CD8-positive, alpha-beta memory T cell (primary cell): ENCODE measurements at regions of chr14 and their contacts with region 1.

Region 1: GRCh38 chr14:67571272-67571850 is 28.7 kb downstream of the PIGH start:
- DNase-seq: peak; percentile 51 to 79 (median 59)
- H3K4me3 ChIP-seq: no peak overlapping the region
- H3K4me3 Mint-ChIP-seq: no peak overlapping the region
- H3K27ac ChIP-seq: no peak overlapping the region
- H3K27ac Mint-ChIP-seq: no peak overlapping the region
- H3K4me1 ChIP-seq: no peaks in the 10 kb centered on the region
- H3K4me1 Mint-ChIP-seq: no peaks in the 10 kb centered on the region
- H3K27me3 ChIP-seq: no peaks in the 10 kb centered on the region
- H3K27me3 Mint-ChIP-seq: peaks cover 5% of the 10 kb centered on the region in 2 donors

Region 2: DNA sequence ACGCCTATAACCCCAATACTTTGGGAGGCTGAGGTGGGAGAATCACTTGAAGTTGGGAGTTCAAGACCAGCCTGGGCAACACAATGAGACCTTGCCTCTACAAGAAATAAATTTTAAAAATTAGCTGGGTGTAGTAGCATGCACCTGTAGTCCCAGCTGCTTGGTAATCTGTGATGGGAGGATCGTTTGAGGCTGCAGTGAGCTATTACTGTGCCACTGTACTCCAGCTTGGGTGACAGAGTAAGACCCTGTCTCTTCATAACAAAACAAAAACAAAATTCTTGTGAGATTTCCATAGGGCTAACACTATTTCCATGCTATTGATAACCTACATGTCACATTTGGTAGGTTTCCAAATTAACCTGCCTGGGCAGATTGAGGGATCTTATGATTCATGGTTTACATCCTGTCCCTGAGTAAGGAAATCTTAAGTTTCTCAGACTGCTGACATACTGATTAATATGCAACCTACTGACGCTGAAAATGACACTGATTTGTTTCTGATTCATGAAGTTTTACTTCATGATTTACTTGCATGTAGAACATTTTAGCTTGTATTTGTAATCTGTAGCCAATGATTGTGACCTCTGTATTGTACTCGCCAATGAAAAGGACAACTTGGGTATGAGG is 227.6 kb before region 1 on chr14:
- CTCF ChIA-PET with region 1: no interaction called
- POLR2A ChIA-PET with region 1: no interaction called
- DNase-seq: no peak
- H3K4me3 ChIP-seq: no peak overlapping the region
- H3K4me3 Mint-ChIP-seq: no peak overlapping the region
- H3K27ac ChIP-seq: no peak overlapping the region
- H3K27ac Mint-ChIP-seq: peak overlapping the region in 2 of 8 donors; percentile 17 to 47
- H3K4me1 ChIP-seq: no peaks in the 10 kb centered on the region
- H3K4me1 Mint-ChIP-seq: no peaks in the 10 kb centered on the region
- H3K27me3 ChIP-seq: no peaks in the 10 kb centered on the region
- H3K27me3 Mint-ChIP-seq: no peaks in the 10 kb centered on the region

Region 3: DNA sequence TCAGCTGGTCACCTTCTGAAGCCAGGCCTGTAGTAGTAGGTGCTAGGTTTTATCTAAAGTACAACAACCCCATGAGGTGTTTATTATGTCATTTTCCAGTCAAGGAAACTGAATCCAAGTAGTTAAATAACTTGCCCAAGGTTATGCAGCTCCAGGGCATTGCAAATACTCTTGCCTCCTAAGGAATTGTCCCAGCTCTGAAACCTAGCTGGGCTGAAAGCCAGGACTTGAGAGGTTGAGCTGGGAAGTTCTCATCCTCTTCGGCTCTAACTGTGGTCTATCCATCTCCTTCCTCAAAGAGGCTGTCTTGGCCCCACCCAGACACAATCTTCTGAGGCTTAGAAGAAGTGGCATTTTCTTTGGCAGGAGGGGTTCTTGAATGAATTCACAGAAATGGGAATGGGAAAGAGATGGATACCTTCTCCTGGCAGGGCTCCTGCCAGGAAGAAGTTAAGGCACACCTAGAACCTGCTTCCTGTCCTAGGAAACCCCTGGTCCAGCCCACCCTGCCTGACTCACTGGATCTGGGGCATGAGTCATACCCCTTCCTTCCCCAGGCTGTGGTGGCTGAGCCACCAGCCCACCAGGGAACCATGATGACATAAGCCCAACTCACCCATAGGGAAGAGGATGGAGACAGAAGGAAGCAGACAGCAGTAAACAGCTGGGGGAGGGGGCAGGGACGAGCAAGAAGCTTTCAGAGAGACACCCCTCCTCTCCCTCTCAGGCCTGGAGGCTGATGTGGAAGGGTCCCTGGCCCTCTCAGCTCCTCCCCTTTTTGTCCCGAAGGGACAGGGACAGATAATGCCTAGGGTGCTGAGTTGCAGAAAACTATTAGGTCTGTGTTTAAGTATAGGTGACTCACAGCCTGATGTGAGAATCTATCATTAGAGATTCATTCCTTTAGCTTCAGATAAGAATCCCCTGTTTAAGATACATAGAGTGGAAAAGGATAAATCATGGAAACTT is 157.3 kb before region 1 on chr14:
- CTCF ChIA-PET with region 1: interaction called, 13 read pairs
- POLR2A ChIA-PET with region 1: no interaction called
- DNase-seq: no peak
- H3K4me3 ChIP-seq: no peak overlapping the region
- H3K4me3 Mint-ChIP-seq: no peak overlapping the region
- H3K27ac ChIP-seq: no peak overlapping the region
- H3K27ac Mint-ChIP-seq: no peak overlapping the region
- H3K4me1 ChIP-seq: peaks cover 6% of the 10 kb centered on the region
- H3K4me1 Mint-ChIP-seq: peaks cover 0 to 9% (median 2%) of the 10 kb centered on the region in 3 donors
- H3K27me3 ChIP-seq: no peaks in the 10 kb centered on the region
- H3K27me3 Mint-ChIP-seq: peaks cover 4 to 9% of the 10 kb centered on the region in 2 donors

Region 4: DNA sequence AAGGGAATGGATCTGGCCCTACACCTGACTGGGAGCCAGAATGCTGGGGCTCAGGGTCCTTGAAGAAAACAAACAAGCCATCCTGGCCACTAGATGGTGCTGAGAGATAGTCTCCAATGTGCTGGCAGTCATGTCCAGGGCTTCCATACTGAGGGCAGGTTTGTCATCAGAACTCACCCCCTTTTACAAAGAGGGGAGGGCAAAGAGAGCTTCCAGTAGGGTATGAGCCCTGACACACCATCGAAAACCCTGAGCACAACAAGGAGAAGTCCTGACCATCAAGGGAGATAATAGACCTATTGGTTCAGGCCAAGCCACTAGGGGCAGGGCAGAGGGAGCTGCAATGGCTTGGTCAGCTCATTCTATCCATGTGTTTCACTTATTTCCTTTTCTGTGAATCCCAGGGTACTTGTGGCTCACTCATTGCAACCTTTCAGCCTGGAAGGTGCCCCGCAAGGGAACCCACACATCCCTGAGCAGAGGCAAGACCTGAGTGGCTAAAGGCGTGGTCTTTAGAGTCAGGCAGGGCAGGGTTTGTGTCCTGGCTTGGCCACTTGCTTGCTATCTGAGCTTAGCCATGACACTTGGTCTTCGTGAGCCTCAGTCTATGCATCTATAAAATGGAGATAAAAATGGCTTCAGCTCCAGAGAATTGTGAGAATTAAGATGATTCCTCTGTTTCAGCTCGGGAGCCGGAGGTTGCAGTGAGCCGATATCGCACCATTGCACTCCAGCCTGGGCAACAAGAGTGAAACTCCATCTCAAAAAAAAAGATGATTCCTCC is 44.5 kb before region 1 on chr14:
- CTCF ChIA-PET with region 1: interaction called, 38 read pairs
- POLR2A ChIA-PET with region 1: no interaction called
- DNase-seq: peak in 2 of 5 donors; percentile 18 to 34
- H3K4me3 ChIP-seq: no peak overlapping the region
- H3K4me3 Mint-ChIP-seq: no peak overlapping the region
- H3K27ac ChIP-seq: no peak overlapping the region
- H3K27ac Mint-ChIP-seq: no peak overlapping the region
- H3K4me1 ChIP-seq: no peaks in the 10 kb centered on the region
- H3K4me1 Mint-ChIP-seq: peaks cover 0 to 3% (median 0%) of the 10 kb centered on the region in 3 donors
- H3K27me3 ChIP-seq: no peaks in the 10 kb centered on the region
- H3K27me3 Mint-ChIP-seq: peaks cover 31 to 37% of the 10 kb centered on the region in 2 donors

Region 5: GRCh38 chr14:67557126-67557525 is 14.2 kb before region 1 on chr14:
- CTCF ChIA-PET with region 1: interaction called, 15 read pairs
- POLR2A ChIA-PET with region 1: no interaction called
- DNase-seq: no peak
- H3K4me3 ChIP-seq: no peak overlapping the region
- H3K4me3 Mint-ChIP-seq: peak overlapping the region in 1 of 7 donors; percentile 5
- H3K27ac ChIP-seq: no peak overlapping the region
- H3K27ac Mint-ChIP-seq: no peak overlapping the region
- H3K4me1 ChIP-seq: no peaks in the 10 kb centered on the region
- H3K4me1 Mint-ChIP-seq: no peaks in the 10 kb centered on the region
- H3K27me3 ChIP-seq: no peaks in the 10 kb centered on the region
- H3K27me3 Mint-ChIP-seq: peaks cover 3 to 4% of the 10 kb centered on the region in 2 donors

Region 6: DNA sequence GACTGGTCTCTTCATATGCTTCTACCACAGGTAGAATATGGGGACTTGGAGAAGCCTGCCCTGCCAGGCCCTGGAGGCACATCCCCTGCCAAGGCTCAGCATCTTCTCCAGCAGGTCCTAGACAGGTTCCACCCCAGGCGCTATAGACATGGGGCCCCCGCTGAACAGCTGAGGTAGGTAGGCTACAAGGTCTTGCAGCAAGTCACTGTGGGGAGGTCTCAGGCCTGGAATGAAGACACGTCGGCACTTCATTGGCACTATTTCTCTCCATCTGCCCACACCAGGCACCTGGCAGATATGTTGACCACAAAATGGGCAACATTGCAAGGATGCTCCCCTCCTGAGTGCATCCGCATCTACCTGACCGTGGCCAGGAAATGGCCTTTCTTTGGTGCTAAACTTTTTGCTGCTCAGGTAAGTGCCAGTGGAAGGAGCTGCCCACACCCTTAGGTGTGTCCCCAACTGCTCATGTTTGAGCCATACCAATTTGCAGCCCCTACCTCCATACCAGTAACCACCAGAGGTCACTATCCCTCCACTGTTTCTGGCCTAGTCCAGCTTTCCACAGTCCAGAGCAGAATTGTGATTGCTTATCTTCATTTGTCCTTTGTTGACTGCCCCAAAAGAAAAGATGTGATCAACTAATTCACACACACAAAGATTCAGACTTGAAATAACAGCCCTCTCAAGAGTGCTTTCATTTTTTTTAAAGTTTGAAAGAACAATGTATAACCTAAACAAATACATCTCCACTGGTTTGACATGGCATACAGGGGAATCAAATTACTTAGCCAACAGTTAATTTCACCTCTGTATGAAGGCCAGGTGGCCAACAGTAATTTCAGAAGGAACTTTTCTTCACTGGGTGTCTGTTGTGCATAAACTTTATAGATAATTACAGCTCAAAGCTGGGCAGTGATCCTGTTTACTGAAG is 12.6 kb after region 1 on chr14:
- CTCF ChIA-PET with region 1: interaction called, 24 read pairs
- POLR2A ChIA-PET with region 1: no interaction called
- DNase-seq: peak in 3 of 5 donors; percentile 8 to 51 (median 21)
- H3K4me3 ChIP-seq: no peak overlapping the region
- H3K4me3 Mint-ChIP-seq: no peak overlapping the region
- H3K27ac ChIP-seq: no peak overlapping the region
- H3K27ac Mint-ChIP-seq: no peak overlapping the region
- H3K4me1 ChIP-seq: no peaks in the 10 kb centered on the region
- H3K4me1 Mint-ChIP-seq: no peaks in the 10 kb centered on the region
- H3K27me3 ChIP-seq: no peaks in the 10 kb centered on the region
- H3K27me3 Mint-ChIP-seq: no peaks in the 10 kb centered on the region